ENCODE measurements at regions of chr22 and their contacts with region 1.

Region 1: GRCh38 chr22:33389936-33390335 is 331.8 kb upstream of the SYN3 start:
- DNase-seq: no peak
- H3K4me3 ChIP-seq: no peak overlapping the region
- H3K27ac ChIP-seq: no peak overlapping the region
- H3K4me1 ChIP-seq: no peaks in the 10 kb centered on the region
- H3K27me3 ChIP-seq: no peaks in the 10 kb centered on the region
- CTCF ChIP-seq: no peak

Region 2: GRCh38 chr22:33325235-33326004 is 64.5 kb before region 1 on chr22:
- CTCF ChIA-PET with region 1: no interaction called
- dilution Hi-C with region 1: loop called (anchors 5 kb)
- in situ Hi-C with region 1: no loop called
- intact Hi-C with region 1: no loop called
- DNase-seq: no peak
- H3K4me3 ChIP-seq: no peak overlapping the region
- H3K27ac ChIP-seq: no peak overlapping the region
- H3K4me1 ChIP-seq: no peaks in the 10 kb centered on the region
- H3K27me3 ChIP-seq: no peaks in the 10 kb centered on the region
- CTCF ChIP-seq: no peak

Measured in mammary epithelial cell (primary cell).